ENCODE measurements at regions of chr14 and their contacts with region 1.

Region 1: DNA sequence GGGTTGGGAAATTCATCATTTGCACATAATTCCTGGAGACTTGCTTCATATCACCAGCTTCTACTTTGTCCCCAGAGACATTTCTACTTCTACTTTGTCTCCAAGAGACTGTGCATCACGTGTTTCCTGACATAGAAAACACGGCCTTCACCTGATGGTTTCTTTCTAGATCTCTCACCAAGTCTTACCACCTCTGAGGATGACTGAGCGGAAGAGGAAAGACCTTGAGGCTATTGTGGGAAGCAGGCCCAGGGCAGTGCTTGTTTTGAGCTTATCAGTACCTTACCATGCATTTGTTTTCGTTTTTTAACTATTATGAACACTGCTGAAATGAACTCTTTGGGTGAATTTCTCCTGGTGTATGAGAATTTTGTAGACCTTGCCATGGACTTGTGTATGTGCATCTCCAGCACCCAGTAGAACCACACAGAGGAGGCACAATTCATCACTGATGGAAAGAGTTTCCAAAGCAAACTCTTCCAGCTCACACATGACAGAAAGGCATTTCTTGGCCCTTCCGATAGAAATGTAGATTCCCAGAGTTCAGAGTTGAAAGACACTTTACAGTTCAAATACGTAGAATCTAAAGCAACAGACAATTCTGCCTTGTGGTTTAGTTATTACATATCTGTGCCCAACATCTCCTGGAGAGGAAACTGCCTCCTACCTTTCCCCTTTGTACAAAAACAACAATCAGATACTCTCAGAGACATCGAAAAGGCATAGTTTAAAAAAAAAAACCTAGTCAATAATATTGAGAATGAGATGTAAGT is 434.7 kb downstream of the FUT8 start:
- DNase-seq: peak; percentile 86
- ATAC-seq: peak; percentile 80
- H3K4me3 Mint-ChIP-seq: peak overlapping the region; percentile 38
- H3K27ac Mint-ChIP-seq: peak overlapping the region; percentile 82
- H3K4me1 Mint-ChIP-seq: peaks cover 67% of the 10 kb centered on the region
- H3K27me3 Mint-ChIP-seq: no peaks in the 10 kb centered on the region
- CTCF ChIP-seq: no peak

Region 2: GRCh38 chr14:65772921-65773574 is 74.2 kb before region 1 on chr14:
- CTCF ChIA-PET with region 1: no interaction called
- POLR2A ChIA-PET with region 1: no interaction called
- intact Hi-C with region 1: no loop called
- DNase-seq: no peak
- ATAC-seq: no peak
- H3K4me3 Mint-ChIP-seq: no peak overlapping the region
- H3K27ac Mint-ChIP-seq: no peak overlapping the region
- H3K4me1 Mint-ChIP-seq: no peaks in the 10 kb centered on the region
- H3K27me3 Mint-ChIP-seq: no peaks in the 10 kb centered on the region
- CTCF ChIP-seq: no peak

Region 3: GRCh38 chr14:65787471-65787870 is 59.8 kb before region 1 on chr14:
- CTCF ChIA-PET with region 1: no interaction called
- POLR2A ChIA-PET with region 1: no interaction called
- intact Hi-C with region 1: no loop called
- DNase-seq: no peak
- ATAC-seq: no peak
- H3K4me3 Mint-ChIP-seq: no peak overlapping the region
- H3K27ac Mint-ChIP-seq: no peak overlapping the region
- H3K4me1 Mint-ChIP-seq: no peaks in the 10 kb centered on the region
- H3K27me3 Mint-ChIP-seq: peaks cover 10% of the 10 kb centered on the region
- CTCF ChIP-seq: no peak

Region 4: GRCh38 chr14:65949711-65950516 is 102.7 kb after region 1 on chr14:
- CTCF ChIA-PET with region 1: interaction called, 3 read pairs
- POLR2A ChIA-PET with region 1: no interaction called
- intact Hi-C with region 1: loop called (anchors 5 kb)
- DNase-seq: peak; percentile 86
- ATAC-seq: peak; percentile 88
- H3K4me3 Mint-ChIP-seq: peak overlapping the region; percentile 9
- H3K27ac Mint-ChIP-seq: peak overlapping the region; percentile 91
- H3K4me1 Mint-ChIP-seq: peaks cover 32% of the 10 kb centered on the region
- H3K27me3 Mint-ChIP-seq: peaks cover 4% of the 10 kb centered on the region
- CTCF ChIP-seq: no peak